Pancreas (tissue), 10 donors: ENCODE measurements at regions of chr6 and their contacts with region 1.

Region 1: DNA sequence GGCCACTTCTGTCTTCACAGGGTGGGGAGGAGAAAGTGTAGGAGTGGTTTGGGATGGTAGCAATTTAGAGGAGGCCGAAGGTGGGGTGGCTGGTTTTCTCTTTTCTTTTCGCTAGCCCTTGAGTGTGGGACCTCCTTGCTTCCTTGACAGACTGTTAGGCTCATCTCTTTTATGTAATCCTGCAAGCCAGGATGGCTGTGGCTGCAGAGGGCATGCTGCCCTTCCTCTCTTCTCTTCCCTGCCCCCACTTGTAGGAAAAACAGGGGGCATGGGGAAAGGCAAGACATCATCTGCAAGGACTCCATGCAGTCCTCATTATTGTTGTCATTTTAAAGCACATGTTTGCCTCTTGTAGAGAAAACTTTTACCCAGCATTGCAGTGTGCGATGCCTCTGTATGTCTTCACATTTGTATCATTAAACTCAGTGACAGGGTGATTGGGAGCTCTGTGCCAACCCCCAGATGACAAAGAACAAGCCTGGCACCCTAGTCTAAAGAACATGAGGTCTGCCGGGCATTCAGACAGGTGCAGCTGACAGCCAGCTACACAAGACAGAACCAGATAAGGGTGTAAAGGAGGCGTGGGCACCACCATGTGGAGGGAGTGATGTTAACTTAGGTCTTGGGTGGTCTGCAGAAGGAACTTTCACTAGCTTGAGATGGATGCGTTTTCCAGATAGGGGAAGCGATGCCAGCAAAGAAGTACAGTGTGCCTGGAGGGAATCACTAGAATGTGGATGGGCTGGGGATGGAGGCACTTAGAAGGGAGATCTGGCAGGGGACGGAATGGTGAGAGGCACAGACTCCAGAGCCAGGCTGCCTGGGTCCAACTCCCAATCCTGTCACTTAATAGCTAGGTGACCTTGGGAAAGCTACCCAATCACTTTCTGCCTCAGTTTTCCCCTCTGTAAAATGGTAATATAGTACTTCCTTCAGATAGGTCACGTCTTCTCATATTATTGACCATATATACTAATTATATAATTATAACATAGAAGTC is 207.6 kb downstream of the TBC1D7 start:
- DNase-seq: peak in 5 of 6 donors; percentile 68 to 87 (median 76)
- ATAC-seq: peak; percentile 94 to 95 (median 94)
- H3K4me3 ChIP-seq: no peak overlapping the region
- H3K27ac ChIP-seq: peak overlapping the region in 2 of 4 donors; percentile 52 to 60
- H3K4me1 ChIP-seq: peaks cover 8 to 24% (median 17%) of the 10 kb centered on the region in 3 donors
- H3K27me3 ChIP-seq: no peaks in the 10 kb centered on the region
- CTCF ChIP-seq: peak in 1 of 4 donors; percentile 19

Region 2: DNA sequence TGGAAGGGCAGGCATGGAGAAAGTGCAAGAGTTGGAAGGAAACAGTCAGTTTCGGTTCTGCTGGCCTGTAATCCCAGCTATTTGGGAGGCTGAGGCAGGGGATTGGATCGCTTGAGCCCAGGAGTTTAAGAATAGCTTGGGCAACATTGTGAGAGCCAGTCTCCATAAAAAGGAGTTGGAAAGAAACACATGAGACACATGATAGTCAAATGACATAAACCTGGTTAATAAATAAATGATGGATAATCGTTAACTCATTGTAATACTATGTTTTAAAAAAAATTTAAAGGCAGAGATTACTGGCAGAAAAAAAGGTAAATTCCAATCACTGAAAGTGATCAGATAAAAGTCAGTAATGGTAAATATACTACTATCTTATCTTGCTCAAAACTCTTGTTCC is 441.4 kb before region 1 on chr6:
- intact Hi-C with region 1: no loop called
- DNase-seq: no peak
- ATAC-seq: no peak
- H3K4me3 ChIP-seq: no peak overlapping the region
- H3K27ac ChIP-seq: no peak overlapping the region
- H3K4me1 ChIP-seq: no peaks in the 10 kb centered on the region
- H3K27me3 ChIP-seq: no peaks in the 10 kb centered on the region
- CTCF ChIP-seq: no peak

Region 3: DNA sequence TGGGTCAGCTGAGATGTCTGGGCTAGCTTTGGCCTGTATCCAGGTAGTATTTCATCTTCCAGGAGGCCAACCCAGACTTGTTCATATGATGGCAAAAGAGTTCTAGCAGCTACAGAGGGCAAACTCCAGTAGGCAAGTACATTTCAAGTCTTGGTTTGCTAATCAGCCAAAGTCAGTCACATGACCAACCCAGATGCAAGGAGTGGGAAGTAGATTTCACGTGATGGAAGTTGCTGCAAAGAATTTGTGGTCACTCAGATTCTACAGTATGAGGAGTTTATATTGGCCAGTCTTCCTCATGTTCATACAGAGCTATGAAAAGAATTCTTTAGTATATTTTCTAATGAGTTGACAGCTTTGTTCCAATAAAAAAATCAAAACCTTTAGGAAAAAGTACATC is 302.5 kb before region 1 on chr6:
- intact Hi-C with region 1: no loop called
- DNase-seq: no peak
- ATAC-seq: peak in 2 of 4 donors; percentile 18 to 23
- H3K4me3 ChIP-seq: no peak overlapping the region
- H3K27ac ChIP-seq: no peak overlapping the region
- H3K4me1 ChIP-seq: no peaks in the 10 kb centered on the region
- H3K27me3 ChIP-seq: no peaks in the 10 kb centered on the region
- CTCF ChIP-seq: no peak

Region 4: DNA sequence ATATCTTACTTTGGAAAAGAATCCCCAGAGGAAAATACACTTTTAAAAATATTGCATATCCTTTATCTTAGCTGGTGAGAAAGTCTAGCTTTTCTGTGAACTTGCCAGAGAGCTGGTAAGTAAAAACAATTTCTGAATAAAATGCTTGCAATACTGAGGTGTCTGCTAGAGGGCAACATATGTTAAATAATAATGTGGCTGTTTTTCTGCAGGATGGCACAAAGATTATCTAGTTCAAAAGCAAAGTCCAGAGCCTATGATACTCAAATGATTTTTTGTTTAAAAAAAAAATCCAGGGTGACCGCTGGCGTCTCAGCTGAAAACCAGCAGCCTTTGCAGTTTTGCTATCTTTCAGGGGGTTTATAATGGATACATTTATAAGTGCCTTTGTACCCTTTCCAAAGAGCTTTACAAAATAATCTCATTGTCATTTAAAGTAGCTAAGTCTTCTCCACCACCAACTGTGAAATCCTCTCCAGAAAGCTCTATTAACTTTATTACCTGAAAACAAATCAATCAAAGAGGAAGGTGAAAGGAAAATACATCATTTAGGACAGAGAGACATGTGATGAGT is 209.3 kb before region 1 on chr6:
- intact Hi-C with region 1: loop called in 2 of 3 experiments (anchors 10 kb)
- DNase-seq: no peak
- ATAC-seq: peak; percentile 55 to 82 (median 74)
- H3K4me3 ChIP-seq: no peak overlapping the region
- H3K27ac ChIP-seq: no peak overlapping the region
- H3K4me1 ChIP-seq: no peaks in the 10 kb centered on the region
- H3K27me3 ChIP-seq: no peaks in the 10 kb centered on the region
- CTCF ChIP-seq: peak in 2 of 4 donors; percentile 33 to 44

Region 5: DNA sequence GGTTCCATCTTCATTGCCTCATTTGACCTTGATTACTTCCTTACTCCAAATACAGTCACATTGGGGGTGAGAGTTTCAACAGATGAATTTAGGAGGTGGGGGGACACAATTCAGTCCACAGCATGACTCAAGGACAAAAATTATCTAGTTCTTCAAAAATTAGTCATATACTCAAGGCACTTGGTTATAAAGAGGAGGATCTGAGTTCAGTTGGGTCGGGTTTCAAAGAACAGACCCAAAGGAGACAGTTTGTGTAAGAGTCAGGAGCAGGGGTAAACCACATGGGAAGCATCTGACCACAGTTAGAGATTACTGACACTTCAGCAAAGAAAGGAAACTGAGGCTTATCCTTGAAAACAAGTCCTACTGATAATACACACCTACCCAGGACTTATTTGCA is 69.6 kb after region 1 on chr6:
- intact Hi-C with region 1: no loop called
- DNase-seq: no peak
- ATAC-seq: no peak
- H3K4me3 ChIP-seq: no peak overlapping the region
- H3K27ac ChIP-seq: no peak overlapping the region
- H3K4me1 ChIP-seq: no peaks in the 10 kb centered on the region
- H3K27me3 ChIP-seq: no peaks in the 10 kb centered on the region
- CTCF ChIP-seq: no peak

Region 6: GRCh38 chr6:13328076-13328874 is 207.5 kb after region 1 on chr6 and contains the start of gene TBC1D7:
- intact Hi-C with region 1: no loop called
- DNase-seq: peak; percentile 87 to 98 (median 94)
- ATAC-seq: peak; percentile 96 to 99 (median 99)
- H3K4me3 ChIP-seq: peak within 1 kb of the TSS; percentile 72 to 86 (median 84)
- H3K27ac ChIP-seq: peak within 1 kb of the TSS; percentile 76 to 94 (median 88)
- H3K4me1 ChIP-seq: peaks cover 0 to 16% (median 6%) of the 10 kb centered on the region in 3 donors
- H3K27me3 ChIP-seq: no peaks in the 10 kb centered on the region
- CTCF ChIP-seq: no peak
- total RNA-seq, gene TBC1D7: 3.3 to 8.4 (median 6.5) TPM